ENCODE measurements at regions of chr11 and their contacts with region 1.

Region 1: DNA sequence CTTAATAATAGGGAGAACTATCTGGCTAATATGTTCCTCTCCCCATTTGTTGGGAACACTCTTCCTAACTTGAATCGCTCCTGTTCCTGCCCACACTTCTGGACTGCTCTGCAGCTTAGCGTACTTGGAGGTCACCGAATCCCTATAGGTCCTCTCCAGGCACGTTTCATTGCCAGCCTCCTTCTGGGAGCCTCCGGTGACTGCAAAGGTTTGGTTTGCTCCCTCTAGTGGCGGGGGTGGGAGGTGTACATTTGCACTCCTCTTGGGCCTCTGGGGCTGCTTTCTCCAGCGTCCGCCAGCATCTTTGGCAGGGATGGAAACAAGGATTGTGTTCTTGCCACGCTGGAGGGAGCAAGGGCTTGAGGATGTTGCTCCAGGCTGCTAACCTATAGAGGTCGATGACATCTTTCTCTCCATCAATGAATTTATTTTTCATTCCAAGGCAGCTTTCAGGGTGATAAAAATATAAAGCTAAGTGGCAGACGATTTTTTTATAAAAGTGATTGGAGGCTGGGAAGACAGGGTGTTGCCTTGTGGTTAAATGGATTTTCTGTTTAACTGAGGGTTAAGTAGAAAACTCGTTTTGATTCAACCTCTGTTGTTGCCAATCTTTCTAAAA is 48.7 kb downstream of the TSPAN18 start:
- DNase-seq: peak; percentile 65
- ATAC-seq: peak; percentile 47
- H3K4me3 ChIP-seq: no peak overlapping the region
- H3K4me3 Mint-ChIP-seq: no peak overlapping the region
- H3K27ac ChIP-seq: no peak overlapping the region
- H3K27ac Mint-ChIP-seq: no peak overlapping the region
- H3K4me1 ChIP-seq: no peaks in the 10 kb centered on the region
- H3K4me1 Mint-ChIP-seq: peaks cover 2% of the 10 kb centered on the region
- H3K27me3 ChIP-seq: peaks cover 0 to 10% (median 0%) of the 10 kb centered on the region in 4 experiments
- H3K27me3 Mint-ChIP-seq: no peaks in the 10 kb centered on the region
- CTCF ChIP-seq: peak; percentile 80

Region 2: GRCh38 chr11:44727373-44728287 is 47.8 kb before region 1 on chr11:
- CTCF ChIA-PET with region 1: interaction called, 3 read pairs
- POLR2A ChIA-PET with region 1: no interaction called
- intact Hi-C with region 1: loop called (anchors 5 kb)
- DNase-seq: peak; percentile 78
- ATAC-seq: peak; percentile 74
- H3K4me3 ChIP-seq: peak overlapping the region in 4 of 5 experiments; percentile 65 to 84 (median 66)
- H3K4me3 Mint-ChIP-seq: peak overlapping the region; percentile 88
- H3K27ac ChIP-seq: peak overlapping the region in 1 of 2 donors; percentile 15
- H3K27ac Mint-ChIP-seq: peak overlapping the region; percentile 80
- H3K4me1 ChIP-seq: peaks cover 14 to 18% of the 10 kb centered on the region in 2 donors
- H3K4me1 Mint-ChIP-seq: peaks cover 19% of the 10 kb centered on the region
- H3K27me3 ChIP-seq: peaks cover 0 to 19% (median 10%) of the 10 kb centered on the region in 4 experiments
- H3K27me3 Mint-ChIP-seq: peaks cover 21% of the 10 kb centered on the region
- CTCF ChIP-seq: peak; percentile 98

Region 3: GRCh38 chr11:44842220-44842619 is 66.7 kb after region 1 on chr11:
- CTCF ChIA-PET with region 1: no interaction called
- POLR2A ChIA-PET with region 1: no interaction called
- intact Hi-C with region 1: no loop called
- DNase-seq: no peak
- ATAC-seq: no peak
- H3K4me3 ChIP-seq: no peak overlapping the region
- H3K4me3 Mint-ChIP-seq: no peak overlapping the region
- H3K27ac ChIP-seq: no peak overlapping the region
- H3K27ac Mint-ChIP-seq: no peak overlapping the region
- H3K4me1 ChIP-seq: no peaks in the 10 kb centered on the region
- H3K4me1 Mint-ChIP-seq: no peaks in the 10 kb centered on the region
- H3K27me3 ChIP-seq: no peaks in the 10 kb centered on the region
- H3K27me3 Mint-ChIP-seq: peaks cover 2% of the 10 kb centered on the region
- CTCF ChIP-seq: no peak

Region 4: GRCh38 chr11:44911029-44911814 is 135.7 kb after region 1 on chr11:
- CTCF ChIA-PET with region 1: interaction called, 8 read pairs
- POLR2A ChIA-PET with region 1: no interaction called
- intact Hi-C with region 1: loop called (anchors 5 kb)
- DNase-seq: peak; percentile 85
- ATAC-seq: peak; percentile 69
- H3K4me3 ChIP-seq: no peak overlapping the region
- H3K4me3 Mint-ChIP-seq: no peak overlapping the region
- H3K27ac ChIP-seq: no peak overlapping the region
- H3K27ac Mint-ChIP-seq: no peak overlapping the region
- H3K4me1 ChIP-seq: peaks cover 23 to 31% of the 10 kb centered on the region in 2 donors
- H3K4me1 Mint-ChIP-seq: peaks cover 24% of the 10 kb centered on the region
- H3K27me3 ChIP-seq: peaks cover 0 to 5% (median 0%) of the 10 kb centered on the region in 4 experiments
- H3K27me3 Mint-ChIP-seq: peaks cover 4% of the 10 kb centered on the region
- CTCF ChIP-seq: peak; percentile 82